Transverse colon (tissue), 4 donors: ENCODE measurements at regions of chr2 and their contacts with region 1.

Region 1: DNA sequence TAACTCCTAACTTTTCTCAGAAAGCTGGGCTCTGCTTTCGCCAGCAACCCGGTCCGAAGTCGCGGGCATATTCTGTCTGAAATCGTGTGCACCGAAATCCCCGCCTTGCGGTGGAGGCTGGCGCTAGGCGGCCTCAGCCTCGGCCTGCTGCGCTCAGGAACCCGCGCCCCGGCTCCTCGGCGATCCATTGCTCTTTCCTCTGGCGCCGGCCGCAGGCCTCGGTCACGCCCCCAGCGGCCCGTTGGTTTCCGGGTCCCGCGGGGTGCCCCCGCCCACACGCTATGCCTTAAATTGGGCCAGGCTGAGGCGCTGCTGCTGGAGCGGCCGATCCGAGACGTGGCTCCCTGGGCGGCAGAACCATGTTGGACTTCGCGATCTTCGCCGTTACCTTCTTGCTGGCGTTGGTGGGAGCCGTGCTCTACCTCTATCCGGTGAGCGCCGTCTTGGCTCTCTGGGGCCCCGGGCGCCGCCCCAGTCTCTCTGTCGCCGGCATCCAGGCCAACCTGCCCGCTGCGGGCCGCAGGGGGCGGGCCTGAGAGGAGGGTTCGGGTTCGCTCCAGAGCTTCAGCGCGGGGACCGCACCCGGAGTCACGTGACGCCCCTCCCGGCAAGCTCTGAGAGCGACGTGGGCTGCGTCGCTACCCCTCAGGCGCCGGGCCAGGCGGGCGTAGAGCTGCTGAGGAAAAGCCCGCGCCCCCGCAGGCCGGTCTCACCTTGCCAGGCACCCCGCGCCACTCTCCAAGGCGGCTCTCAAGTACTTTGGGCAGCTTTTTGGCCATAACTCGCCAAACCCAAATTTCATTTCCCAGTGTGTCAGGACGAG is at the start of gene CYP20A1:
- DNase-seq: peak; percentile 97
- H3K4me3 ChIP-seq: peak within 1 kb of the TSS; percentile 63 to 80 (median 74)
- H3K27ac ChIP-seq: peak within 1 kb of the TSS; percentile 93 to 98 (median 96)
- H3K4me1 ChIP-seq: peaks cover 0 to 25% (median 11%) of the 10 kb centered on the region in 4 donors
- H3K27me3 ChIP-seq: no peaks in the 10 kb centered on the region
- CTCF ChIP-seq: peak; percentile 21 to 60 (median 34)
- EP300 ChIP-seq: no peak
- POLR2A ChIP-seq: peak; percentile 95
- total RNA-seq, gene CYP20A1: 6.0 to 34.4 (median 29.6) TPM

Region 2: GRCh38 chr2:203014456-203015199 is 224.3 kb before region 1 on chr2 and contains the start of gene NBEAL1:
- in situ Hi-C with region 1: no loop called
- intact Hi-C with region 1: no loop called
- DNase-seq: peak; percentile 99
- H3K4me3 ChIP-seq: peak within 1 kb of the TSS; percentile 68 to 91 (median 81)
- H3K27ac ChIP-seq: peak within 1 kb of the TSS; percentile 96 to 98 (median 96)
- H3K4me1 ChIP-seq: peaks cover 4 to 51% (median 29%) of the 10 kb centered on the region in 4 donors
- H3K27me3 ChIP-seq: no peaks in the 10 kb centered on the region
- CTCF ChIP-seq: no peak
- EP300 ChIP-seq: no peak
- POLR2A ChIP-seq: peak; percentile 95
- total RNA-seq, gene NBEAL1: 59.1 to 287 (median 154) TPM

Region 3: DNA sequence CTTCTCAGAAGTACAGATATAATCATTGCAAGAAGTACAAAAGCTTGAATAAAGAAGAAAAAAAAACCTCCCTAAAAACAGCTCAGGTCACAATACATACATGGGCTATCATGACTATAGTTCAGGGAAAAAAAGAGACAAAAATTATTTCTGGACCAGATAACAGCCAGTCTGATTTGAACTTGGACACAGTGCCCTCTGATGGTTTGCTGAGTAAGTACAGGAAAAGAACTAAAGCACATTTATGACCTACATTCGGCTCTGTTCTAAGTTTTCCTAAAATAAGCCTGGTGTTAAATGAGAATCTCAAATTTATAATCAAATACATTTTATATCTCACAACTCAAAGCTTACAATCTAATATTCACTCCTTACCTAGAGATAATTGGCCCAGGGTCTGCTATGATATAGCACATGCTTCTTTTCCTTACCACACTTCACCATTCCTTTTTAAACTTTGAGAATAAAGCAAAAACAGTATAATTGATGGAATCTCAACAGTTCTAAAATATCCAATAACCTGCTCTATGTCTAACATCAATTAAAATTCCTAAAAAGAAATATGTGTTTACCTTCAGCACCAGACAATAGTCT is 215.0 kb after region 1 on chr2:
- in situ Hi-C with region 1: loop called in 1 of 4 experiments (anchors 25 kb)
- intact Hi-C with region 1: no loop called
- DNase-seq: no peak
- H3K4me3 ChIP-seq: no peak overlapping the region
- H3K27ac ChIP-seq: peak overlapping the region in 2 of 4 donors; percentile 29 to 68
- H3K4me1 ChIP-seq: peaks cover 0 to 36% (median 24%) of the 10 kb centered on the region in 4 donors
- H3K27me3 ChIP-seq: no peaks in the 10 kb centered on the region
- CTCF ChIP-seq: peak; percentile 59 to 78 (median 67)
- EP300 ChIP-seq: no peak
- POLR2A ChIP-seq: no peak

Region 4: DNA sequence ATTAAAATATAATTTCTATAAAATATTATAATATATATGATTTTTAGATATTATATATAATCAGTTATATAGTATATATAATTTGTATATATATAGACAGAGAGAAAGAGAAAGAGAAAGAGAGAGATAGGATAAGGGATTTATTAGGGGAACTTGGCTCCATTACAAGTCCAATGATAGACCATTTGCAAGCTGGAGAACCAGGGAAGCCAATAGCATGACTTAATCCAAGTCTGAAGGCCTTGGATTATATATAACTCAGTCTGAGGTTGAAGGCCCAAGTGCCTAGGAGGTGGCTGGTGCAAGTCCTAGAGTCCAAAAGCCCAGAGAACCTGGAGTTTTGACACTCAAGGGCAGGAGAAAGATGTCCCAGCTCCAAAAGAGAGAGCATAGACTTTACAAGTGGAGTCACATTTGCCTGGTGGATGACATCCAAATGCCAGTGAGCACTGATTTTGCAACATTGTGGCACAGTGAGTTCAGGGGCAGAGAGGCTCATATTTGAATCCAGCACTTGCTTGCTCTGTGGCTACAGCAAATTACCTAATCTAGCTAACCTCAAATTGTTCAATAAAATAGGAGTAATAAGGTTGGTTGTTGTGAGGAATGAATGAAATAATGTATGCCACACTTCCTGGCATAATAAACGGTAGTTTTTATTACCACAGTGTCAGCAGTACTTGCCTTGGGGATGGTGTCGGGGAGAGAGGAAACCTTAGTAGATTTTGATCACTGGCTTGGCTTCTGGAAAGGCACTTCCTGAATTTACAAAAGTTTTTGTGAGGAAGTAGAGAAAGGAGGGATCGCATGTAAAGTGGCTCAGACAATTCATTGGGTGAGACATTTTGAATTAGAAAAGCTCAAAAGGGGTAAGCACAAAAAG is 397.9 kb after region 1 on chr2:
- in situ Hi-C with region 1: loop called in 1 of 4 experiments (anchors 25 kb)
- intact Hi-C with region 1: no loop called
- DNase-seq: peak; percentile 41
- H3K4me3 ChIP-seq: no peak overlapping the region
- H3K27ac ChIP-seq: peak overlapping the region; percentile 33 to 75 (median 53)
- H3K4me1 ChIP-seq: peaks cover 14 to 18% (median 18%) of the 10 kb centered on the region in 4 donors
- H3K27me3 ChIP-seq: no peaks in the 10 kb centered on the region
- CTCF ChIP-seq: no peak
- EP300 ChIP-seq: no peak
- POLR2A ChIP-seq: no peak

Region 5: DNA sequence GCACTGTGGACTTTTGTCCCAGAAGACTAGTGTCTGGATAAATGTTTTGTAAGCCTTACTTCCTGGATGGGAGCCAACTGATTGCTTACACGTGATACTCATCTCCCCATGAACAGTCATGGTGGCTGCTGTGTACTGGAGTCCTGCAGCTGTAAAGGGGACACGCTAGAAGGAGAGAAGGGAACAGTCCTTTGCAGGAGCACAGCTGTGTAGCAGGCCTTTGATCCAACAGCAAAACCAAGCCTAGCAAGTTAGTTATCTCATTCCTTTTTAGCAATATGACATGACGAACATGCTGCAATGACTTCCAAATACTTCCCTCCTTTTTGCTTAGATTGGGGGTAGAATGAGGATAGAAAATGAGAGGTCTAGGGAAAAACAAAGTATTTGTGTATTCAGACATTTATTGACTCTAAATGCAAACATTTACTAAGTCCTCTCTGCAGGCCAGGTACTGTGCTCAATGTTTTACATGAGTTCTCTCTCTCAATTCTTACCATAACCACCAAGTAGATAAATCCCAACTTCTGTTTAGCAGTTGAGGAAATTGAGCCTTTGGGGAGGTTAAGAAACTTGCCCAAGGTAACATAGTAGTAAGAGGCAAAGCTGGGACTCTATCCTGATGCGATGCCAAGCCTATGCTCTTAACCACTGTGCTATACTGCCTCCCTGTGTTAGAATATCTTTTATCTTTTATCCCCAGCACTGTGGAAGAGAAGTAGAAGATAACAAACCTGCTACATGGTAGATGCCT is 412.1 kb after region 1 on chr2:
- in situ Hi-C with region 1: loop called in 2 of 4 experiments (anchors 25 kb)
- intact Hi-C with region 1: no loop called
- DNase-seq: peak; percentile 69
- H3K4me3 ChIP-seq: no peak overlapping the region
- H3K27ac ChIP-seq: peak overlapping the region; percentile 83 to 89 (median 86)
- H3K4me1 ChIP-seq: peaks cover 20 to 44% (median 36%) of the 10 kb centered on the region in 4 donors
- H3K27me3 ChIP-seq: no peaks in the 10 kb centered on the region
- CTCF ChIP-seq: peak; percentile 36 to 63 (median 44)
- EP300 ChIP-seq: no peak
- POLR2A ChIP-seq: no peak

Region 6: DNA sequence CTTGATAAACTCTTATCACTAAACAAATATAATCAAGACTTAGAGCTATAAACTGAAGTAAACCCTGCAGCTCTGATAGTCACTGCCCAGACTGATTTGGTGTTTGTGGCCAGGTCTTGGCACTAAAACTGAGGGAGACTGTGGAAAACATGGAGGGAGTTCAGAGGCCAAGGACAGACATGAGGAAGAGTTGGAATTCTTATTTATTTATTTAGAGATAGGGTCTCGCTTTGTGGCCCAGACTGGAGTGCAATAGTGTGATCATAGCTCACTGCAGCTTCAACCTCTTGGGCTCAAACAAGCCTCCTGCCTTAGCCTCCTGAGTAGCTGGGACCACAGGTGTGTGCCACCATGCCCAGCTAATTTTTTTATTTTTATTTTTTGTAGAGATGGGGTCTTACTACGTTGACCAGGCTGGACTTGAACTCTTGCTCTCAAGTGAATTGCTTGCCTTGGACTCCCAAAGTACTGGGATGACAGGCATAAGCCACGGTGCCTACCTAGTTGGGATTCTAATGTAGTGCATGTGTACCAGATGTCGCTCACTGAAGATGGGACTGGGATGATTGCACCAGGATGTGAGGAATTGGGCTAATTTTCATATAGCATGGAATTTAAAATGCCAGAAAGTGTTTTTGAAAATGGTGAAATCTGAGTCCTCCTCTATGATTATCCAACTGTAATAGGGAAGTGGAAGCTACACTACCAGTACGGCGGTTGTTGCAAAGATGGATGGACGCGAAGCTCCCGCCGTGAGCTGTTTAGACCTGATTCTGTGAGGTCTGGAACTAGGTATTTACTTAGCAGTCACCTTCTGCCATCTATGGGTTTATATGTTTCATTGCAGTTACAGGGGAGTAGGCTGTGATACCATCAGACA is 576.0 kb after region 1 on chr2:
- in situ Hi-C with region 1: loop called in 2 of 4 experiments (anchors 25 kb)
- intact Hi-C with region 1: no loop called
- DNase-seq: peak; percentile 71
- H3K4me3 ChIP-seq: no peak overlapping the region
- H3K27ac ChIP-seq: peak overlapping the region; percentile 64 to 70 (median 68)
- H3K4me1 ChIP-seq: peaks cover 10 to 59% (median 35%) of the 10 kb centered on the region in 4 donors
- H3K27me3 ChIP-seq: no peaks in the 10 kb centered on the region
- CTCF ChIP-seq: peak; percentile 69 to 91 (median 76)
- EP300 ChIP-seq: no peak
- POLR2A ChIP-seq: no peak

Region 7: DNA sequence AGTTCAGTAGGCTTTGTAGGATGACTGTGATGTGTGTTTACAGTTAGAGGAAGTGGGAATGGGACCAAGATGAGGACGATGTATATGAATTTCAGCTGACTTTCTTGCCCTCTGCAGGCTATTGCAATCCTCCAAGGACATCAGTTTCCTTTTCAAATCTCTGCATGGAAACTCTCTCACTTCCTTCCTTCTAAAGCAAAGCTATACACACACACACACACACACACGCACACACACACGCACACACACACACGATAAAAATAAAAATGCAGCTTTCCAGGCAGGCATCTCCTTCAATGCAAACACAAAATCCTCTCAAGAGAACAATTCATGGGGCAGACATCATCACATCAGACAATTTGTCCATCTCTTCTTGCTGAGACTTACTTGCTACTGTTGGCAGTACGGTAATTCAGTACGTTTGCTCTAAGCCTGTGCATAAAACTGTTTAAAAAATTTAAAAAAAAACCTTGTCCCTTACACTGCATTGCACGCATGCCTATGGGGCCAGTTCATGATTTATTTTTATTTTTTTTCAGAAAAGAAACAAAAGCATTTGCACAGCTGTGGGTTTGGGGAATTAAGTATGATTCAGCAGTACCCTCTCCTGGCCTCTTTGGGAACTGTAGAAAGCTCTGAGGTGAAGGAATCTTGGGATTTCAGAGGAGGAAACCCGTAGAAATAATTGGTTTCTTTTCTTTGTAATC is 670.5 kb after region 1 on chr2:
- in situ Hi-C with region 1: loop called in 1 of 4 experiments (anchors 25 kb)
- intact Hi-C with region 1: no loop called
- DNase-seq: peak; percentile 11
- H3K4me3 ChIP-seq: peak overlapping the region in 1 of 4 donors; percentile 25
- H3K27ac ChIP-seq: peak overlapping the region in 2 of 4 donors; percentile 19 to 44
- H3K4me1 ChIP-seq: peaks cover 0 to 20% (median 11%) of the 10 kb centered on the region in 4 donors
- H3K27me3 ChIP-seq: no peaks in the 10 kb centered on the region
- CTCF ChIP-seq: peak; percentile 64 to 78 (median 72)
- EP300 ChIP-seq: no peak
- POLR2A ChIP-seq: no peak